Colonic mucosa (tissue), 4 donors: ENCODE measurements at regions of chr10 and their contacts with region 1.

Region 1: DNA sequence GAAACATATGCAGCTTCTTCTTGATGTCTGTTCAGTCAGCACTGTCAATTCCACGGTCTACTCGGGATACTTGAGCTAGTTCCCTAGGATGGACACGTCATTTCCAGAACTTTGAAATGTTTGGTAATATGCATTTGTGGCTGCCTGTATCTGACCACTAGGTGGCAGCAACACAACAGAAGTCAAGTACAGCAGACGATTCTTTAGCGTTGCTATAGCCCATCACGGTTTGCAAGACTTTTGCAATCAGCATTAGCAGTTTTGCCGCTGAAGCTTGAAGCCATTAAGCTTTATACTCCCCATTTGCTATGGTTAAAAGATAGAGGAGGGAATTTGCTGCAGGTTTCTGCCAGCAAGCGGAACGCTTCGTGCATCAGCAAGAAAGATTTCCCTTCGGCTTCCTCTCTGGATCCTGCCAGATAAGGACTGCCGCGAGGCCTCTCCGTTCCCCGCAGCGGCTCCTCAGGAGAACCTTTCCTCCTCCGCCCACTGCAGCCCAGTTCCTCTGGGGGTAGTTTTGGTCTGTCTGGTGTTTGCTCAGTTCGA is 63.5 kb downstream of the ABCC2 start:
- DNase-seq: peak; percentile 83
- H3K4me3 ChIP-seq: no peak overlapping the region
- H3K27ac ChIP-seq: no peak overlapping the region
- H3K4me1 ChIP-seq: no peaks in the 10 kb centered on the region
- H3K27me3 ChIP-seq: no peaks in the 10 kb centered on the region
- CTCF ChIP-seq: peak; percentile 83

Region 2: DNA sequence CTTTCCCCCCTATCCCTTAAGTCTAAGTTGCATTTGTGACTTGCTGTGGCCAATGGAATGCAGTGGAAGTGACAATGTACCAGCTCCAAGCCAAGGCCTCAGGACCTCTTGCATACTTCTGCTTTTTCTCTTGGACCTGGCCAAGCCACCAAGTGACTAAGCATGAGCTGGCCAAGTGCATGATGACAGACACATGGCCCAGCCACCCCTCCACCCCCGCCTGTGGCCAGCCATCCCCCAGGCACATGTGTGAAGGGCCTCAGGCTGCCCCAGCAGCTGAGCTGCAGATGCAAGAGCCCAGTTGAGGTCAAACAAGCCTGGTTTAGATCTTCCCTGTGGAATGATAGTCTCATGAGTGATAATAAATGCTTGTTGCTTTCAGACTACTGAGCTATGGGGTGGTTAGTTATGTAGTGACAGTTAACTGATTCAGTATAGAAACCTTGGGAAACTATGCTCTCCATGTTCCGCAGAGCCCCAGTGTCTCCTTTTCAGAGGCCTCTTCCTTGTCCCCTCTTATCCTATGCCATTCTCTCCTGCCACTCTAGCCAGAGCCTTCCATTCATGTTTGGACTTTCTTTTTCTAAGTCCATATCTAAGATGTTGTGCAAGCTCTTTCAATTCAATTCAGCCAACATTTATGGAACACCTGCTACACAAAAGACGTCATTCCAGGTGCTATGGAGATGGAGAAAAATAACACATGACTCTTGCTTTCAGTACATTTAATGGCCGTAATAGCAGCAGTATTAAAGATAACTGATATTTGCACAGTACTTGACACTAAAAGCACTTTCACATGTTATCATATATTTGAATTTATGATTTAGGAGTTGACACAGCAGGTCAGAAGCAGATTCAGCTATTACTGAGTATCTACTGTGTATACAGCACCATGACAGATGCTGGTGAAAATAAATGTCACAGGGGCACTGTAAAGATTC is 1522.4 kb before region 1 on chr10:
- intact Hi-C with region 1: no loop called
- DNase-seq: peak; percentile 26
- H3K4me3 ChIP-seq: no peak overlapping the region
- H3K27ac ChIP-seq: no peak overlapping the region
- H3K4me1 ChIP-seq: no peaks in the 10 kb centered on the region
- H3K27me3 ChIP-seq: no peaks in the 10 kb centered on the region
- CTCF ChIP-seq: no peak

Region 3: GRCh38 chr10:99966306-99966705 is 120.4 kb after region 1 on chr10:
- intact Hi-C with region 1: loop called (anchors 5 kb)
- DNase-seq: no peak
- H3K4me3 ChIP-seq: no peak overlapping the region
- H3K27ac ChIP-seq: no peak overlapping the region
- H3K4me1 ChIP-seq: no peaks in the 10 kb centered on the region
- H3K27me3 ChIP-seq: no peaks in the 10 kb centered on the region
- CTCF ChIP-seq: no peak

Region 4: GRCh38 chr10:100046021-100046486 is 200.1 kb after region 1 on chr10:
- intact Hi-C with region 1: loop called (anchors 2 kb)
- DNase-seq: peak; percentile 92
- H3K4me3 ChIP-seq: no peak overlapping the region
- H3K27ac ChIP-seq: no peak overlapping the region
- H3K4me1 ChIP-seq: no peaks in the 10 kb centered on the region
- H3K27me3 ChIP-seq: no peaks in the 10 kb centered on the region
- CTCF ChIP-seq: peak; percentile 94

Region 5: DNA sequence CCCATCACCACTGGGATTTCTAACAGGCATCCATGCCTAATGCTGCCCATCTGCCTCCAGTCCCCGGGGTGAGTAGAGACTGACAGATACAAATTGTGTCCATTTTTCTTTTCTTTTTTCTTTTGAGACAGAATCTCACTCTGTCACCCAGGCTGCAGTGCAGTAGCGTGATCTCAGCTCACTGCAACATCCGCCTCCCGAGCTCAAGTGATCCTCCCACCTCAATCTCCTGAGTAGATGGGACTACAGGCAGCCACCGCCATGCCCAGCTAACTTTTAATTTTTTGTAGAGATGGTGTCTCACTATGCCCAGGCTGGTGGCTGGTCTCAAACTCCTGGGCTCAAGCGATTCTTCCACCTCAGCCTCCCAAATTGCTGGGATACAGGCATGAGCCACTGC is 243.3 kb after region 1 on chr10:
- intact Hi-C with region 1: no loop called
- DNase-seq: no peak
- H3K4me3 ChIP-seq: no peak overlapping the region
- H3K27ac ChIP-seq: no peak overlapping the region
- H3K4me1 ChIP-seq: no peaks in the 10 kb centered on the region
- H3K27me3 ChIP-seq: no peaks in the 10 kb centered on the region
- CTCF ChIP-seq: no peak